PC-3 (cell line): ENCODE measurements at regions of chr10 and their contacts with region 1.

Region 1: DNA sequence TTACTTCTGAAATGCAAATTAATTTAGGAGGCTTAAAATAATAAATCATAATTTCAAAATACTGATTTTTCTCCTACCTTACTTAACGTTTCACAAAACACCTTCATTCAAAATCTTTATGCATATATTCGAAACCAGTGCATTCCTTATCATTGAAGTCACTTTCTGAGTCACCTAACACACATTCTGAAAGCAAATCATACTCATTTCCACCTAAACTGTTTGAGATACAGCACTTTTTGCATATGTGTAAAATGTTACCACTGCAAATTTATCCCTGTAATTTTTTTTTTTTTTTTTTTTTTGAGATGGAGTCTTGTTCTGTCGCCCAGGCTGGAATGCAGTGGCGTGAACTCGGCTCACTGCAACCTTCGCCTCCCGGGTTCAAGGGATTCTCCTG is 15.7 kb downstream of the PPP3CB start:
- DNase-seq: peak; percentile 98
- ATAC-seq: peak; percentile 89
- H3K4me3 ChIP-seq: peak overlapping the region; percentile 0; the same call in 1 of the 2 replicates
- H3K27ac ChIP-seq: no peak overlapping the region
- H3K4me1 ChIP-seq: peaks cover 19% of the 10 kb centered on the region
- H3K27me3 ChIP-seq: no peaks in the 10 kb centered on the region
- CTCF ChIP-seq: no peak

Region 2: DNA sequence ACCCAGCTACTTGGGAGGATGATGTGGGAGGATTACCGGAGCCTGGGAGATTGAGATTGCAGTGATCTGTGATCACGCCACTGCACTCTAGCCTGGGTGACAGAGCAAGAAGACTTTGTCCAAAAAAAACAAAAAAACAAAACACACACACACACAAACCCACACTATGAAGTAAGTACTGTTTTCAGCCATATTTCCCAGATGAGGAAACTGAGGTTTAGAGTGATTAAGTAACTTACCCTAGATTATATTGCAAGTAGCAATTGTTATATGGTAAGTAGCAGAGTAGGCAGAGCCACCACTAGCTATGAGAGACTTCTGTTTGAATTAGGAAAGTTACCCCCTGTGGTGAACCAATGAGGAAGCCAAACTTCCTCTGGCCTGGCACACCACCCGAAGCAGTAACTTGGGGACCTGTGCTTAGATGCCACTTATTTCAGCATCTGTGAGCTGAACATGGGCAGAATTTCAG is 726.4 kb before region 1 on chr10:
- CTCF ChIA-PET with region 1: no interaction called
- POLR2A ChIA-PET with region 1: no interaction called
- intact Hi-C with region 1: loop called (anchors 1 kb)
- DNase-seq: no peak
- ATAC-seq: no peak
- H3K4me3 ChIP-seq: no peak overlapping the region
- H3K27ac ChIP-seq: no peak overlapping the region
- H3K4me1 ChIP-seq: no peaks in the 10 kb centered on the region
- H3K27me3 ChIP-seq: peaks cover 14% of the 10 kb centered on the region
- CTCF ChIP-seq: no peak

Region 3: DNA sequence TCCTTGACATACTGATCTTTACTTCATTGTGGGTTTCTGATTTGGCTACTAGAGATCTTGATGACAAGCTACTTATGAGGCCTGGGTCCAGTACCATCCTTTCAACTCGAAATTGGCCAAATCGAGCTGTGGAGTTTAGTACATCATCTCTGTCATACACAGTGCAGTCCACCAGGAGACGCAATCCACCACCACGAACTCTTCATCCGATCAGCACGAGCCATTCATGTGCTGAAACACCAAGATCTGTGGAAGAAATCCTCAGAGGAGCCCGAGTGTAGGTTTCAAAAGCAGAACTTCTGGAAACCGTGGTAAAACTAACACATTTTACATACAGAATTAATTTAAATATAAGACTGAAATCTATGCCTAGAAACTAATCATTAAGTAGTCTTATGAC is 247.3 kb before region 1 on chr10:
- CTCF ChIA-PET with region 1: no interaction called
- POLR2A ChIA-PET with region 1: no interaction called
- intact Hi-C with region 1: no loop called
- DNase-seq: peak; percentile 57
- ATAC-seq: peak; percentile 23; the same call in 1 of the 2 replicates
- H3K4me3 ChIP-seq: no peak overlapping the region
- H3K27ac ChIP-seq: no peak overlapping the region
- H3K4me1 ChIP-seq: no peaks in the 10 kb centered on the region
- H3K27me3 ChIP-seq: no peaks in the 10 kb centered on the region
- CTCF ChIP-seq: peak; percentile 79

Region 4: DNA sequence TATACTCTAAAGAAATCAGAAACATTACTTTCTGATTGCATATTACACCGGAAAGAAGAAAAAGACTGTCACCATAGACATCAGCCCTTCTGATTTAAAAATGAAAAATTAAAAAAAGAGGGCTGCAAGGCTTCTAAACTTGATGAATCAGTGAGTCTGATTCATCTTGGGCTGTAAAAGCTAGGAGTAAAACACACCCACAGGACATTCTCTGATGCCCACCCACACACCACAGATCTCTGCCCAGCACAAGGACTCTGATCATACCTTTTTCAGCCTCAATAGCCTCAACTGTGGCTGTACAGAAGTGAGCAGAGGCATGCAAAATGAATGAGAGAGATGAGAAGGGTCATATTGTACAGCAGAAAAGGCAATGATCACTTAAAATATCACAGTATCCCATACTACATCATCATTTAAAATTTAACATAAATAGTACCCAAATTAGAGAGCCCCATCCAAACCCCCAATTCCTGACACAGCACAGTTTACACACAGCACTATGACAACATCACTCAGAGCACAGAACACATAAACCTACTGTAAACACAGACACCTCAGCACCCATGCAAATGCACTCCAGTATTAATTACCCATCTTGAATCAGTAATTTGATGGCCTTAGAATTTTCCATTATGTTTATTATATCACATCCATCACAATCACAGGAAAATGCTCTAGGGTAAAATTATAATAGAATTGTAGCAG is 40.4 kb before region 1 on chr10:
- CTCF ChIA-PET with region 1: no interaction called
- POLR2A ChIA-PET with region 1: interaction called, 5 read pairs
- intact Hi-C with region 1: loop called (anchors 1 kb)
- DNase-seq: peak; percentile 84
- ATAC-seq: peak; percentile 93
- H3K4me3 ChIP-seq: no peak overlapping the region
- H3K27ac ChIP-seq: no peak overlapping the region
- H3K4me1 ChIP-seq: peaks cover 15% of the 10 kb centered on the region
- H3K27me3 ChIP-seq: no peaks in the 10 kb centered on the region
- CTCF ChIP-seq: no peak

Region 5: GRCh38 chr10:73459683-73460314 is 20.4 kb before region 1 on chr10:
- CTCF ChIA-PET with region 1: no interaction called
- POLR2A ChIA-PET with region 1: no interaction called
- intact Hi-C with region 1: no loop called
- DNase-seq: no peak
- ATAC-seq: no peak
- H3K4me3 ChIP-seq: no peak overlapping the region
- H3K27ac ChIP-seq: no peak overlapping the region
- H3K4me1 ChIP-seq: no peaks in the 10 kb centered on the region
- H3K27me3 ChIP-seq: no peaks in the 10 kb centered on the region
- CTCF ChIP-seq: no peak